ENCODE measurements at regions of chr21 and their contacts with region 1.

Region 1: DNA sequence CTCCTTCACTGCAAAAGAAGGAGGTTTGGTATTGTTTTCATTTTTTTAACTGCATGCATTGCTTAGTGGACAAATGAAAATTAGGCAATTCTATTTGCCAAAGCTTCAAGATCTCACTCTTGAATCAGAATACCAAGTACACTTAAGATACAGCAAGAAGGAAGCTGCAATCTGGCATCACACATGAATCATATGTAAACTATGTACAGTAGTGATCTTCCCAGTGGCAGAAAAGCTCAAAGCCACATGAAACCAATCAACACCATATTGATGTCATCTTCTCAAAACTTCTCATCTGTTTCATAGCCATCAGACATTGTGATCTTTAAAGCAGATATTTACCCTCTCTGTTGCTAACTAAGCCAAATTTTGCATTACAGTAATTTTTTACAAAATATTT is 550.1 kb downstream of the LTN1 start:
- DNase-seq: peak; percentile 86
- ATAC-seq: peak; percentile 49; the same call in 1 of the 2 replicates
- H3K4me3 ChIP-seq: no peak overlapping the region
- H3K27ac ChIP-seq: no peak overlapping the region
- H3K4me1 ChIP-seq: peaks cover 12% of the 10 kb centered on the region; the same call in 1 of the 2 replicates
- H3K27me3 ChIP-seq: no peaks in the 10 kb centered on the region
- CTCF ChIP-seq: no peak
- POLR2A ChIP-seq: no peak
- RAD21 ChIP-seq: no peak

Region 2: GRCh38 chr21:28421716-28422524 is 20.7 kb before region 1 on chr21:
- CTCF ChIA-PET with region 1: interaction called, 3 read pairs
- POLR2A ChIA-PET with region 1: no interaction called
- dilution Hi-C with region 1: no loop called
- in situ Hi-C with region 1: no loop called
- intact Hi-C with region 1: loop called (anchors 1 kb)
- DNase-seq: peak; percentile 78
- ATAC-seq: peak; percentile 56
- H3K4me3 ChIP-seq: no peak overlapping the region
- H3K27ac ChIP-seq: peak overlapping the region; percentile 79; the same call in 1 of the 2 replicates
- H3K4me1 ChIP-seq: peaks cover 11% of the 10 kb centered on the region
- H3K27me3 ChIP-seq: no peaks in the 10 kb centered on the region
- CTCF ChIP-seq: no peak
- POLR2A ChIP-seq: no peak
- RAD21 ChIP-seq: no peak